HEK293 (cell line): ENCODE measurements at regions of chr1 and their contacts with region 1.

Region 1: GRCh38 chr1:21534674-21535378 is 25.6 kb downstream of the ALPL start:
- H3K4me3 ChIP-seq: no peak overlapping the region
- H3K27ac ChIP-seq: no peak overlapping the region
- H3K4me1 ChIP-seq: no peaks in the 10 kb centered on the region
- CTCF ChIP-seq: peak; percentile 73

Region 2: GRCh38 chr1:21511579-21512522 is 23.0 kb before region 1 on chr1:
- CTCF ChIA-PET with region 1: interaction called, 14 read pairs
- POLR2A ChIA-PET with region 1: no interaction called
- H3K4me3 ChIP-seq: no peak overlapping the region
- H3K27ac ChIP-seq: no peak overlapping the region
- H3K4me1 ChIP-seq: no peaks in the 10 kb centered on the region
- CTCF ChIP-seq: no peak

Region 3: GRCh38 chr1:21564521-21565095 is 29.8 kb after region 1 on chr1:
- CTCF ChIA-PET with region 1: no interaction called
- POLR2A ChIA-PET with region 1: no interaction called
- H3K4me3 ChIP-seq: no peak overlapping the region
- H3K27ac ChIP-seq: no peak overlapping the region
- H3K4me1 ChIP-seq: no peaks in the 10 kb centered on the region
- CTCF ChIP-seq: no peak

Region 4: DNA sequence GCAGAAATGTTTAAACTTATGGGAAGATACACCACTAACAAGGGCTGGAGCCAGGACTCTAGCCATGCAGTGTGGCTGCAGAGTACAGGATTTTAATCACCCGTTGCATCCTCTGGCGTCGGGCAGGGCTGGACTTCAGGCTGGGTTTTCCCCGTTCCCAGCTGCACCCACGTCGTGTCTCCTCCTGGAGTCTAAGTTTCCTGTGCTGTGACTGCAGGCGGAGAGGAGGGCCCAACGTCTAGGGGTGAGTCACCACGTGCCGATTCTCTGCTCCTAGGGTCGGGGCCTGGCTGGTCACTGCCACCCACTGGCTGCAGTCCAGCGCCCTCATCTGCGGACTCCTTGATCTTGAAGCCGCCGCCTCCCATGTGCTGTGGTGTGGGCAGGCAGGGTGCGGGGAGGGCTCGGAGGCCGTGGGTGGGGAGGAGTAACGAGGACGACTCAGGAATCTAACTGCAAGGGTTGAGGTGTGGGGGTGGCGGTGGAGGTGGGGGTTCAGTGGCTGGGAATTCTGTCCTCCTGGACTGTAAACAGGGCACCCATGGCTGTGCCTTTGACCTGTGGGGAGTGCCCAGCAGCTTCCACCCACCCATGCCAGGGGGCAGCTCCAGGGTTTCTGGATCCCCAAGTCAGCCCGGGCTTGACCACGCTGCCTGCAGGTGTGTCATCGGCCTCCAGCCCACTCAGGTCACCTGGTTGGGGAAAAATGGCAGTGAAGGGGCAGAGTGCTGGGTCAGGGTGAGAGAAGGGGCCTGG is 52.2 kb after region 1 on chr1:
- CTCF ChIA-PET with region 1: no interaction called
- POLR2A ChIA-PET with region 1: no interaction called
- H3K4me3 ChIP-seq: no peak overlapping the region
- H3K27ac ChIP-seq: no peak overlapping the region
- H3K4me1 ChIP-seq: no peaks in the 10 kb centered on the region
- CTCF ChIP-seq: no peak